ENCODE measurements at regions of chr5 and their contacts with region 1.

Region 1: DNA sequence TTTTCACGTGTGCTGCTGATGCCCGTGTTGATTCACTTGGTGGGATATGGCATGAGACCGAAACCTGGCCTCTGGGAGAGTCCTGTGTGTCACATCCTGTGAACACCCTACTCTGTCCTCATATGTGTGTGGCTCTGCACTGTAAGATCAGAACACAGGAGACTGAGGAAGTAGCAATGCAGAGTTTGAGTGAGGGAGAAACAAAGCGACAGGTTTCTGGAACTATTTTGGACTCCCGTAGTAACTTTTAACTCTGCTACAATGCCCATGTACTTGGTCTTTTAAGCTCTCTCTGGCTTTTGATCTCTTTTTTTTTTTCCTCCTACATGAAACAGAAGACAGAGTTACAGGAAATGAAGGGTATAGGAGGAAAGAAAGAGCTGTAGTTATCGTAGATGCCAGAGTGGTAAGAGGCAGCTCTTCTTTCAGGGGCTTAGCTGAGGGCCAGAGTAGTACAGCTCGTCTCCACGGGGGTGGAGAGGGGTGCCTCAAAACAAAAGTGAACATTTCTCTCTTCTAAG is 26.6 kb downstream of the GRAMD2B start:
- DNase-seq: peak; percentile 90
- H3K4me3 Mint-ChIP-seq: peak overlapping the region; percentile 82
- H3K27ac Mint-ChIP-seq: peak overlapping the region; percentile 100
- H3K4me1 Mint-ChIP-seq: peaks cover 81% of the 10 kb centered on the region
- H3K27me3 Mint-ChIP-seq: no peaks in the 10 kb centered on the region

Region 2: GRCh38 chr5:125476901-125477585 is 972.8 kb before region 1 on chr5:
- CTCF ChIA-PET with region 1: no interaction called
- intact Hi-C with region 1: no loop called
- DNase-seq: no peak
- H3K4me3 Mint-ChIP-seq: no peak overlapping the region
- H3K27ac Mint-ChIP-seq: no peak overlapping the region
- H3K4me1 Mint-ChIP-seq: no peaks in the 10 kb centered on the region
- H3K27me3 Mint-ChIP-seq: no peaks in the 10 kb centered on the region

Region 3: DNA sequence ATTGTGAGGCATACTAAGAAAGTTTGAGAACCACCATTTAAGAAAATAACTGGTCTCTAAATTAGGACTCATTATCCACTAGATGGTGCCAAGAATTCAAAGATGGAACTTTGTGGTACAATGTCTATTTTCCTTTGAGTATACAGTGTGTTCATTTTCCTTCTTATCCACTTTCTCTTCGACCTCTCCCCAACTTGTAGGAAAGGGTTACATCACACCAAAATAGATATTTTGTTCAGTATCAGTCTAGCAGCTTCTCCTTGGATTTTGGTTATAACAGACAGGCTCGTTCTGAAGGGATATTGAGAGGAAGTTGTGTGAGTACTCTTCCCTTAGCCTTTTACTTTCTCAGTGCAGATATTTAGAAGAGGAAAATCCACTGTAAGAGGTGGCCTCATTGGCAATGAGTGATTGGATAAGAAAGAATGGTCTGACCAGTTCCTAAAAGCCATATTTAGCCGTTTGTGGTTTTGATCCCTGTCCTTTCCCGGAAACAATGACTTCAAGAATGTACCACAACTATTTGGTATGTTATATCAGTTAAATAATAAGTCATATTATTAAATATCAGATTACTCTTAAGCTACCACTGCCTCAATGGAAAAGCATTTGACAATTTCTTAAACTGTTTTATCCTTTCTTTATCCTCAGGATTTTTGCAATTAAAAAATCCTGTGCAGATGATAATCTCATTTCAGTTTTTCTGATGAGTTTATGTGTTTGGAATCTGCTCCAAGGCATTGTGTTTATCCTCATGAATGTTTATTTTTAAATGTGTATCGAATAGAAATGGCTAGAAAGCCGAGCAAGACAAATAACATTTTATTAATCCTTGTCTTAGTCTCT is 95.6 kb before region 1 on chr5:
- CTCF ChIA-PET with region 1: interaction called, 3 read pairs
- intact Hi-C with region 1: loop called (anchors 1 kb)
- DNase-seq: no peak
- H3K4me3 Mint-ChIP-seq: peak overlapping the region; percentile 33
- H3K27ac Mint-ChIP-seq: no peak overlapping the region
- H3K4me1 Mint-ChIP-seq: peaks cover 12% of the 10 kb centered on the region
- H3K27me3 Mint-ChIP-seq: no peaks in the 10 kb centered on the region

Region 4: GRCh38 chr5:126462239-126463014 is 12.6 kb after region 1 on chr5:
- CTCF ChIA-PET with region 1: no interaction called
- intact Hi-C with region 1: loop called (anchors 1 kb)
- DNase-seq: no peak
- H3K4me3 Mint-ChIP-seq: no peak overlapping the region
- H3K27ac Mint-ChIP-seq: no peak overlapping the region
- H3K4me1 Mint-ChIP-seq: peaks cover 18% of the 10 kb centered on the region
- H3K27me3 Mint-ChIP-seq: no peaks in the 10 kb centered on the region

Region 5: DNA sequence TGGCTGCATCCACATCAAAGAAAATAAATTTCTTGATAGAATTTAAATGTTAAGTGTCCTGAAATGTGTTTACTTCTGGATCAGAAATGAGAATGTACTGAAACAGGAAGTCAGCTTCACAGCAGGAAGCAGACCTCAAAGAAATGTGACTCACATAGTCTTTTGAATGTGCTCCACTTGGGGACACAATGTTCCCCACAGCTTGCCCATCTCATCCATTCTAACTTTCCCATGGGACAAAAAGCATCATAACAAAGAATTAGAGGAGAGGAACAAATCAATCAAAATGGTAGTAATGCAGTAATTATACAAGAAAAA is 59.1 kb after region 1 on chr5:
- CTCF ChIA-PET with region 1: no interaction called
- intact Hi-C with region 1: loop called (anchors 1 kb)
- DNase-seq: peak; percentile 28
- H3K4me3 Mint-ChIP-seq: peak overlapping the region; percentile 33
- H3K27ac Mint-ChIP-seq: peak overlapping the region; percentile 64
- H3K4me1 Mint-ChIP-seq: peaks cover 40% of the 10 kb centered on the region
- H3K27me3 Mint-ChIP-seq: no peaks in the 10 kb centered on the region

Region 6: GRCh38 chr5:126763371-126763770 is 313.6 kb after region 1 on chr5:
- CTCF ChIA-PET with region 1: no interaction called
- intact Hi-C with region 1: loop called (anchors 5 kb)
- DNase-seq: no peak
- H3K4me3 Mint-ChIP-seq: no peak overlapping the region
- H3K27ac Mint-ChIP-seq: peak overlapping the region; percentile 53
- H3K4me1 Mint-ChIP-seq: peaks cover 44% of the 10 kb centered on the region
- H3K27me3 Mint-ChIP-seq: no peaks in the 10 kb centered on the region

Region 7: GRCh38 chr5:127410959-127411358 is 961.1 kb after region 1 on chr5:
- CTCF ChIA-PET with region 1: no interaction called
- intact Hi-C with region 1: no loop called
- DNase-seq: no peak
- H3K4me3 Mint-ChIP-seq: no peak overlapping the region
- H3K27ac Mint-ChIP-seq: no peak overlapping the region
- H3K4me1 Mint-ChIP-seq: no peaks in the 10 kb centered on the region
- H3K27me3 Mint-ChIP-seq: peaks cover 11% of the 10 kb centered on the region